ENCODE measurements at regions of chr11 and their contacts with region 1.

Region 1: DNA sequence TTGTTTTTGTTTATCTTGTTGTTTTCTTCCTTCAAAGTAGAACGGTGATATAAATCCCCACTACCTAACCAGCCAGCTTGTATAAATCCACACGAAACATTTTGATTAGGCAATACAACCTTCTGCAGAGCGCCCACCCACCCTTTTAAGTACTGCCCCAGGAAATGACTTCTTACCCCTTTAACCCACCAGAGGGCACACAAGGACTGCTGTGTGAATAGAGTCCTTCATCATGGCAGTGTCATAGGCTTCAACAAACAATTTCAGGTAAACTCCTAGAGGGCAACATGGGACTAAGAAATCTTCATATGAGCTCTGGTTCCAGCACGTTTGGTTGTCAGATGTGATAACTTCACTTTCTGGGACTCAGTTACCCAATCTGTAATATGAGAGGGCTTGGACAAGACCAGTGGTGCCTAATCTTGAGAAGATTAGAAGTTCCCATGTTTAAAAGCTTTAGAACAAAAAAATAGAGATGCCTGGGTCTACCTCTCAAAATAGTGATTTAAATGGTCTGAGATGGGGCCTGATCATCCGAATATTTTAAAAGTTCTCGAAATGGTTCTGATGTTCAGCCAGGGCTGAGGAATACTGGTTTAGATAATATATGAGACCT is 56.1 kb downstream of the PIWIL4 start:
- DNase-seq: peak in 13 of 14 experiments; percentile 5 to 71 (median 19)
- ATAC-seq: peak; percentile 91
- H3K4me3 ChIP-seq: no peak overlapping the region
- H3K4me3 Mint-ChIP-seq: no peak overlapping the region
- H3K27ac ChIP-seq: no peak overlapping the region
- H3K27ac Mint-ChIP-seq: no peak overlapping the region
- H3K4me1 ChIP-seq: no peaks in the 10 kb centered on the region
- H3K4me1 Mint-ChIP-seq: no peaks in the 10 kb centered on the region
- H3K27me3 ChIP-seq: no peaks in the 10 kb centered on the region
- H3K27me3 Mint-ChIP-seq: peaks cover 11% of the 10 kb centered on the region
- CTCF ChIP-seq: peak; percentile 48

Region 2: GRCh38 chr11:93295921-93296575 is 1327.2 kb before region 1 on chr11:
- CTCF ChIA-PET with region 1: no interaction called
- POLR2A ChIA-PET with region 1: no interaction called
- intact Hi-C with region 1: no loop called
- DNase-seq: no peak
- ATAC-seq: no peak
- H3K4me3 ChIP-seq: no peak overlapping the region
- H3K4me3 Mint-ChIP-seq: no peak overlapping the region
- H3K27ac ChIP-seq: no peak overlapping the region
- H3K27ac Mint-ChIP-seq: no peak overlapping the region
- H3K4me1 ChIP-seq: no peaks in the 10 kb centered on the region
- H3K4me1 Mint-ChIP-seq: no peaks in the 10 kb centered on the region
- H3K27me3 ChIP-seq: peaks cover 0 to 6% of the 10 kb centered on the region in 2 experiments
- H3K27me3 Mint-ChIP-seq: peaks cover 8% of the 10 kb centered on the region
- CTCF ChIP-seq: no peak

Region 3: GRCh38 chr11:94417386-94417987 is 205.7 kb before region 1 on chr11:
- CTCF ChIA-PET with region 1: no interaction called
- POLR2A ChIA-PET with region 1: no interaction called
- intact Hi-C with region 1: no loop called
- DNase-seq: no peak
- ATAC-seq: no peak
- H3K4me3 ChIP-seq: no peak overlapping the region
- H3K4me3 Mint-ChIP-seq: no peak overlapping the region
- H3K27ac ChIP-seq: no peak overlapping the region
- H3K27ac Mint-ChIP-seq: no peak overlapping the region
- H3K4me1 ChIP-seq: no peaks in the 10 kb centered on the region
- H3K4me1 Mint-ChIP-seq: no peaks in the 10 kb centered on the region
- H3K27me3 ChIP-seq: no peaks in the 10 kb centered on the region
- H3K27me3 Mint-ChIP-seq: no peaks in the 10 kb centered on the region
- CTCF ChIP-seq: no peak

Region 4: DNA sequence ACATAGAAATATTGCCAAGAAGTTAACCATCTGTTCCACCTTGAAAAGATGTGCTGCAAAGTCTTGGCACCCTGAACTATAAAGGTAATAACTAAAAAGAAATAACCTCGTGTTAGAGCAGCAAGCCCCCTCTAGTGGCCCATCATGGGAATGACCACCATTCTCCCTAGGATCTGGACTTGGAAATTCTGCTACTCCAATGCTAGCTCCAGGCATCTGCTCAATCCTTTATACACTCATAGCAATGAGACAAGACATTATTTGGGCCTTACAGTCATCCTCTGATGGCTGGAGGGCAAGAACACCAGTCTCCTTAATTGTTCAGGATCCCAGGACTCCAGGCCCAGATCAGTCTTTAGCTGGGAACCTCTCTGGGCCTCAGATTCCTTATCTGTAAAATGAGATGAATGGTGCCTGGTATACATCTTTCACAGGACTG is 274.1 kb after region 1 on chr11:
- CTCF ChIA-PET with region 1: no interaction called
- POLR2A ChIA-PET with region 1: no interaction called
- intact Hi-C with region 1: loop called (anchors 1 to 5 kb)
- DNase-seq: peak in 8 of 14 experiments; percentile 13 to 53 (median 22)
- ATAC-seq: no peak
- H3K4me3 ChIP-seq: no peak overlapping the region
- H3K4me3 Mint-ChIP-seq: no peak overlapping the region
- H3K27ac ChIP-seq: no peak overlapping the region
- H3K27ac Mint-ChIP-seq: no peak overlapping the region
- H3K4me1 ChIP-seq: no peaks in the 10 kb centered on the region
- H3K4me1 Mint-ChIP-seq: no peaks in the 10 kb centered on the region
- H3K27me3 ChIP-seq: no peaks in the 10 kb centered on the region
- H3K27me3 Mint-ChIP-seq: no peaks in the 10 kb centered on the region
- CTCF ChIP-seq: peak; percentile 88

Region 5: GRCh38 chr11:95835768-95836488 is 1212.7 kb after region 1 on chr11:
- CTCF ChIA-PET with region 1: no interaction called
- POLR2A ChIA-PET with region 1: no interaction called
- intact Hi-C with region 1: loop called in 1 of 2 experiments (anchors 5 kb)
- DNase-seq: peak; percentile 23 to 75 (median 40)
- ATAC-seq: peak; percentile 99
- H3K4me3 ChIP-seq: no peak overlapping the region
- H3K4me3 Mint-ChIP-seq: no peak overlapping the region
- H3K27ac ChIP-seq: no peak overlapping the region
- H3K27ac Mint-ChIP-seq: no peak overlapping the region
- H3K4me1 ChIP-seq: no peaks in the 10 kb centered on the region
- H3K4me1 Mint-ChIP-seq: no peaks in the 10 kb centered on the region
- H3K27me3 ChIP-seq: no peaks in the 10 kb centered on the region
- H3K27me3 Mint-ChIP-seq: no peaks in the 10 kb centered on the region
- CTCF ChIP-seq: peak; percentile 94

Measured in CD4-positive, alpha-beta T cell (primary cell).